A673 (cell line): ENCODE measurements at regions of chr6 and their contacts with region 1.

Region 1: GRCh38 chr6:84150705-84151104 is 76.7 kb downstream of the CEP162 start:
- DNase-seq: no peak
- H3K4me3 ChIP-seq: no peak overlapping the region
- H3K27ac ChIP-seq: no peak overlapping the region
- H3K4me1 ChIP-seq: no peaks in the 10 kb centered on the region
- H3K27me3 ChIP-seq: no peaks in the 10 kb centered on the region
- CTCF ChIP-seq: no peak

Region 2: GRCh38 chr6:84902354-84902928 is 751.7 kb after region 1 on chr6:
- CTCF ChIA-PET with region 1: no interaction called
- POLR2A ChIA-PET with region 1: no interaction called
- intact Hi-C with region 1: loop called (anchors 5 kb)
- DNase-seq: no peak
- H3K4me3 ChIP-seq: no peak overlapping the region
- H3K27ac ChIP-seq: no peak overlapping the region
- H3K4me1 ChIP-seq: peaks cover 4% of the 10 kb centered on the region
- H3K27me3 ChIP-seq: no peaks in the 10 kb centered on the region
- CTCF ChIP-seq: no peak